Dendritic cell treated with granulocyte-macrophage colony-stimulating factor and Interleukin-4, amounts not matched to agents 40 ng/mL and 50 ng/mL, for 4 days (primary cell): ENCODE measurements at regions of chr4 and their contacts with region 1.

Region 1: GRCh38 chr4:63831590-63832155 is 577.6 kb downstream of the TECRL start:
- H3K4me3 Mint-ChIP-seq: no peak overlapping the region
- H3K27ac Mint-ChIP-seq: no peak overlapping the region
- H3K4me1 Mint-ChIP-seq: no peaks in the 10 kb centered on the region
- H3K27me3 Mint-ChIP-seq: no peaks in the 10 kb centered on the region

Region 2: GRCh38 chr4:63786171-63786570 is 45.5 kb before region 1 on chr4:
- intact Hi-C with region 1: no loop called
- H3K4me3 Mint-ChIP-seq: no peak overlapping the region
- H3K27ac Mint-ChIP-seq: no peak overlapping the region
- H3K4me1 Mint-ChIP-seq: no peaks in the 10 kb centered on the region
- H3K27me3 Mint-ChIP-seq: no peaks in the 10 kb centered on the region

Region 3: DNA sequence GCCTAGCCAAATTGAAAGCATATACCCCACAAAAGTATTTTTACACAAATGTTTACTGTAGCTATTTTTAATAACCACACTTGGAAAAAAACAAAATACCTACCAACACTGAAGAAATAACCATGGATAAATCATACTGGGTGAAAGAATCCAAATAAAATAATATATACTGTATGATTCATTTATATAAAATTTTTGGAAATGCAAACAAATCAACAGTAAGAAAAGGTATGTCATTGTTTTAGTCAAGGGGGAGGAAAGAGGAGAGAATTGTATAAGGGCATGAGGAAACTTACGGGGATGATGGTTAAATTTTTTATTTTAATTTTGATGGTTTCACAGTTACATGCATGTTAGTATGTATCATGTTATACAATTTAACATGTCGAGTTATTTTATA is 19.8 kb after region 1 on chr4:
- intact Hi-C with region 1: loop called (anchors 1 kb)
- H3K4me3 Mint-ChIP-seq: no peak overlapping the region
- H3K27ac Mint-ChIP-seq: no peak overlapping the region
- H3K4me1 Mint-ChIP-seq: no peaks in the 10 kb centered on the region
- H3K27me3 Mint-ChIP-seq: no peaks in the 10 kb centered on the region

Region 4: GRCh38 chr4:63983224-63983623 is 151.6 kb after region 1 on chr4:
- intact Hi-C with region 1: no loop called
- H3K4me3 Mint-ChIP-seq: no peak overlapping the region
- H3K27ac Mint-ChIP-seq: no peak overlapping the region
- H3K4me1 Mint-ChIP-seq: no peaks in the 10 kb centered on the region
- H3K27me3 Mint-ChIP-seq: no peaks in the 10 kb centered on the region

Region 5: DNA sequence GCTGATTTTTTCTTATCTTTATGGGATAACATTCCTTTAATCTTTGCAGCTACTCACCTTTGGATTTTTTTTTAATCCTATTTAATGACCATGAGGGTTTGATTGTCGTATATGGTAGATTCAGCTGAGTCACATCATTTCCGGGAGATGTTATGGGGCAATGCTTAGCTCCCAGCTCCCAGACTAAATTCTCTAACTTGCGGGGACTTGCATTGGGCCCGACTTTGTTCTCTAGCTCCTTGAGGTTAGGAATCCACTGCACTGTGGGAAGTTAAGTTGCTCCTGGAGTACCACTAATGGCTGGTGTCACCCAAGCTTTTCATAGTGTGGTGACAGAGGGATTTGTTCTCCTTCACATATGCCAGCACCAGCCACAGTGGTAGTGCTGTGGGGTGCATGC is 290.1 kb after region 1 on chr4:
- intact Hi-C with region 1: no loop called
- H3K4me3 Mint-ChIP-seq: no peak overlapping the region
- H3K27ac Mint-ChIP-seq: no peak overlapping the region
- H3K4me1 Mint-ChIP-seq: no peaks in the 10 kb centered on the region
- H3K27me3 Mint-ChIP-seq: no peaks in the 10 kb centered on the region